MCF 10A (cell line): ENCODE measurements at regions of chr12 and their contacts with region 1.

Region 1: GRCh38 chr12:116277393-116278278 is at the start of gene MED13L:
- DNase-seq: peak; percentile 84
- H3K4me3 Mint-ChIP-seq: peak within 1 kb of the TSS; percentile 84
- H3K27ac Mint-ChIP-seq: peak within 1 kb of the TSS; percentile 96
- H3K4me1 Mint-ChIP-seq: peaks cover 12% of the 10 kb centered on the region
- H3K27me3 Mint-ChIP-seq: no peaks in the 10 kb centered on the region
- CTCF ChIP-seq: peak; percentile 29
- total RNA-seq, gene MED13L: 74.9 and 91.6 TPM in 2 replicates

Region 2: GRCh38 chr12:115998119-115998633 is 279.5 kb before region 1 on chr12:
- CTCF ChIA-PET with region 1: no interaction called
- POLR2A ChIA-PET with region 1: interaction called, 3 read pairs
- intact Hi-C with region 1: loop called (anchors 5 kb)
- DNase-seq: peak; percentile 56
- H3K4me3 Mint-ChIP-seq: no peak overlapping the region
- H3K27ac Mint-ChIP-seq: no peak overlapping the region
- H3K4me1 Mint-ChIP-seq: no peaks in the 10 kb centered on the region
- H3K27me3 Mint-ChIP-seq: no peaks in the 10 kb centered on the region
- CTCF ChIP-seq: peak; percentile 63

Region 3: GRCh38 chr12:116142936-116143898 is 134.4 kb before region 1 on chr12:
- CTCF ChIA-PET with region 1: interaction called, 7 read pairs
- POLR2A ChIA-PET with region 1: no interaction called
- intact Hi-C with region 1: loop called (anchors 2 kb)
- DNase-seq: peak; percentile 55
- H3K4me3 Mint-ChIP-seq: peak overlapping the region; percentile 27
- H3K27ac Mint-ChIP-seq: peak overlapping the region; percentile 86
- H3K4me1 Mint-ChIP-seq: peaks cover 50% of the 10 kb centered on the region
- H3K27me3 Mint-ChIP-seq: no peaks in the 10 kb centered on the region
- CTCF ChIP-seq: no peak

Region 4: GRCh38 chr12:116266168-116266601 is 11.5 kb before region 1 on chr12:
- CTCF ChIA-PET with region 1: interaction called, 4 read pairs
- POLR2A ChIA-PET with region 1: interaction called, 12 read pairs
- intact Hi-C with region 1: no loop called
- DNase-seq: peak; percentile 50
- H3K4me3 Mint-ChIP-seq: no peak overlapping the region
- H3K27ac Mint-ChIP-seq: no peak overlapping the region
- H3K4me1 Mint-ChIP-seq: peaks cover 6% of the 10 kb centered on the region
- H3K27me3 Mint-ChIP-seq: no peaks in the 10 kb centered on the region
- CTCF ChIP-seq: no peak

Region 5: GRCh38 chr12:116426391-116427136 is 148.9 kb after region 1 on chr12:
- CTCF ChIA-PET with region 1: interaction called, 3 read pairs
- POLR2A ChIA-PET with region 1: no interaction called
- intact Hi-C with region 1: loop called (anchors 5 kb)
- DNase-seq: peak; percentile 88
- H3K4me3 Mint-ChIP-seq: no peak overlapping the region
- H3K27ac Mint-ChIP-seq: no peak overlapping the region
- H3K4me1 Mint-ChIP-seq: peaks cover 9% of the 10 kb centered on the region
- H3K27me3 Mint-ChIP-seq: no peaks in the 10 kb centered on the region
- CTCF ChIP-seq: no peak

Region 6: GRCh38 chr12:116599285-116600136 is 321.9 kb after region 1 on chr12:
- CTCF ChIA-PET with region 1: interaction called, 4 read pairs
- POLR2A ChIA-PET with region 1: interaction called, 3 read pairs
- intact Hi-C with region 1: loop called (anchors 2 kb)
- DNase-seq: peak; percentile 57
- H3K4me3 Mint-ChIP-seq: no peak overlapping the region
- H3K27ac Mint-ChIP-seq: no peak overlapping the region
- H3K4me1 Mint-ChIP-seq: no peaks in the 10 kb centered on the region
- H3K27me3 Mint-ChIP-seq: no peaks in the 10 kb centered on the region
- CTCF ChIP-seq: peak; percentile 71

Region 7: DNA sequence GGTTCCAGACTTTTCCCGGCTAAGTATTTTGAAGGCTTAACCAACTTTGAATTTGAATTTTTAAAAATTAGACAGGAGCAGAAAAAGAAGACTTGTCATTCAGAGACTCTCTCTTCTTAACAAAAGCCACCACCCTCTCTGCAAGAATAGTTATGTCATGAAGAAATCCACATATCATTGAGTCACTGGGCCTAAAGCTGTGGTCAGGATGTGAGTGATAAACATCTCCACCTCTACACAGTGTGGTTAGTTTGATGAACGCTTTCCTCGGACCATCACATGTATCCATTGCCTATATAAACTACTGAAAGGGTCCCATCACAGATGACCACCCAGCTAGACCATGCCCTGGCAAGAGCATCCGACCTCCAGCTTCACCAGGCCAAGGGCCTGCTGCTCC is 1465.1 kb after region 1 on chr12:
- CTCF ChIA-PET with region 1: no interaction called
- POLR2A ChIA-PET with region 1: no interaction called
- intact Hi-C with region 1: no loop called
- DNase-seq: no peak
- H3K4me3 Mint-ChIP-seq: no peak overlapping the region
- H3K27ac Mint-ChIP-seq: no peak overlapping the region
- H3K4me1 Mint-ChIP-seq: no peaks in the 10 kb centered on the region
- H3K27me3 Mint-ChIP-seq: no peaks in the 10 kb centered on the region
- CTCF ChIP-seq: no peak